ENCODE measurements at regions of chr4 and their contacts with region 1.

Region 1: DNA sequence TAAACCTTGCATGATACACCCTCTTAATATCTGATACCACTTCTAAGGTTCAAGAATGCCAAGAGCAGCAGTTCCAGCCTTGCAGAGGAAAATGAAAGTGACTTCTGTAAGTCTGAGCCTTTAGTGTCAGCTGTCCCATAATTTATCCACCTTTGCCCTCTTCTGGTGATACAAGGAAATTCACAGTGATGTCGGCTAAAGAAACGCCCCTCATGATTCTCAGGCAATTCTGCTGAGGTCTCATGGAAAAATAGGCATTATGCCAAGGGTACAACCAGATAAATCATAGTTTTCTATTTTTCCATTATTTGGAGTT is 172.2 kb upstream of the CXCL13 start:
- DNase-seq: no peak
- H3K4me3 ChIP-seq: no peak overlapping the region
- H3K27ac ChIP-seq: peak overlapping the region; percentile 9
- H3K4me1 ChIP-seq: peaks cover 19% of the 10 kb centered on the region
- H3K27me3 ChIP-seq: no peaks in the 10 kb centered on the region
- CTCF ChIP-seq: peak; percentile 77

Region 2: DNA sequence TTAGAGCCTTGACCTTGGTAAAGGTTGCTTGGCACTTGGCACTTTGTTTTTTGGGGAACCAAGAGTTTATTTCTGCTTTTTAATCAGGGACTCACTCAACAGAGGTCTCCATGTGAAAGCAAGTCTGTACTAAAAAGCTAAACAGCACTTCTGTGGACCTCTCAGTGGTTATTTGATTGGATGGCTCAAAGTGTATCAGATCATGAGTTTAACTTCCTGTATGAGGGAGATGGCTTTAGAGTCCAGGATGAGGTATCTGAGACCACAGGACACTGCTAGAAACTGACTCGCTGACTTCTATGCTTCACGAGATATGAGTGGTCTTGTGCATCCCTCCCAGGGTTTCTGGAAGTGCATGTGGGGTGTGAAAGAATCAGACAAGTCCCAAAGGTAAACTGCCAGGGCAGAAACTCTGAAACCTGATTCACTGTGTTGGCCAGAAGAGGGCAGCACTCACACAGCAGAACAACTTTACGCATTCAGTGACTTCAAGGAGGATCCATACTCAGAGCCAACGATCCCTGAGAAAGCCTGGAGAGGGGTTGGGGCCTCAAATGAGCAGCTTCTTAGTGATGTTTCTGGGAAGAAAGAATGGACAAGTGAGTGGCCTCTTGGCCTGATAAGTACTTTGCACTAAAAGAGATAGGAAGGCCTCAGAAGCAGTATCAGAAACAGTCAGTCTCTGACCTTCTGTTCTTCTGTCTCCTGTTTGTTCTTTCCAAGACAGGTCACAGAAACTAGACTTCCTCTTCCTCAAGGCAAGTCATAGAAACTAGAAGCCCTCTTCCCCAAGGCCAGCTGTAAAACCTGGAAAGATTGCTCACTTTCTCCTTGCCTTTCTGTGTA is 48.0 kb before region 1 on chr4:
- intact Hi-C with region 1: loop called (anchors 5 kb)
- DNase-seq: peak; percentile 22
- H3K4me3 ChIP-seq: no peak overlapping the region
- H3K27ac ChIP-seq: no peak overlapping the region
- H3K4me1 ChIP-seq: no peaks in the 10 kb centered on the region
- H3K27me3 ChIP-seq: peaks cover 7% of the 10 kb centered on the region
- CTCF ChIP-seq: peak; percentile 88

Region 3: GRCh38 chr4:78939667-78940008 is 1506.3 kb after region 1 on chr4:
- intact Hi-C with region 1: no loop called
- DNase-seq: no peak
- H3K4me3 ChIP-seq: peak overlapping the region; percentile 91
- H3K27ac ChIP-seq: peak overlapping the region; percentile 72
- H3K4me1 ChIP-seq: peaks cover 27% of the 10 kb centered on the region
- H3K27me3 ChIP-seq: no peaks in the 10 kb centered on the region
- CTCF ChIP-seq: no peak